ENCODE measurements at regions of chr5 and their contacts with region 1.

Region 1: DNA sequence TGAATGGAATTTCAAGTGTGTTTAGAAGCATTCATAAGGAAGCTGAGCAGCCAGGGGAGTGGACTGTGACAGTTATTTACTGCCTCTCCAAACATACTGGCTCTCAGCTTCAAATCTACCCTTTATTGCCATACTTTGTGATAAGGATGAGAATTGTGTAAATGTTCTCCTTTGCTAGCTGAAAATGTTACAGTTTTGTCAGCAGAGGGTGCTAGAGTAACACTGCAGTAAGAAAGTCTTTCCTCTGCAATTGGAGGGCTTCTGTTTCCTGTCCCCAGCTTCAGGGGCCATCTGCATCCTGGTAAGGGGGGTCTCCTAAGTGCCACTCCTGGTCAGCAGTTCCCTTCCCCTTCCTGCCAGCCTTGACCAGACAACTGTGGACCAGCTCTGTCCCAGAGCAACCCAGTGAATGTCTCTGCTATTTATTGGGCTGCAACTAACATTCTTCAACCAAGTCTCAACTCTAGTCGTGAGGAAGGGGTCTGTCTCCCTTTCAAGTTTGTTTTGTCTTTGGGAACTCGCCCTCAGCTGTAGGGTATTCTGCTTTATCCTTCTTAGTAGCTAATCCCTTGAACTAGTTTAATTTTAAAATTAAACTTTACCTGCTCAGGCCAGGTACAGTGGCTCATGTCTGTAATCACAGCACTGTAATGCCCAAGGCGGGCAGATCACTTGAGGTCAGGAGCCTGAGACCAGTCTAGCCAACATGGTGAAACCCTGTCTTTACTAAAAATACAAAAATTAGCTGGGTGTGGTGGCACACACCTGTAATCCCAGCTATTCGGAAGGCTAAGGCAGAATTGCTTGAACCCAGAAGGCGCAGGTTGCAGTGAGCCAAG is 45.3 kb downstream of the RAPGEF6 start:
- DNase-seq: peak in 8 of 14 experiments; percentile 11 to 76 (median 33)
- ATAC-seq: peak; percentile 71
- H3K4me3 ChIP-seq: no peak overlapping the region
- H3K4me3 Mint-ChIP-seq: no peak overlapping the region
- H3K27ac ChIP-seq: no peak overlapping the region
- H3K27ac Mint-ChIP-seq: peak overlapping the region; percentile 38
- H3K4me1 ChIP-seq: peaks cover 16% of the 10 kb centered on the region
- H3K4me1 Mint-ChIP-seq: peaks cover 64% of the 10 kb centered on the region
- H3K27me3 ChIP-seq: no peaks in the 10 kb centered on the region
- H3K27me3 Mint-ChIP-seq: no peaks in the 10 kb centered on the region
- CTCF ChIP-seq: peak; percentile 98

Region 2: DNA sequence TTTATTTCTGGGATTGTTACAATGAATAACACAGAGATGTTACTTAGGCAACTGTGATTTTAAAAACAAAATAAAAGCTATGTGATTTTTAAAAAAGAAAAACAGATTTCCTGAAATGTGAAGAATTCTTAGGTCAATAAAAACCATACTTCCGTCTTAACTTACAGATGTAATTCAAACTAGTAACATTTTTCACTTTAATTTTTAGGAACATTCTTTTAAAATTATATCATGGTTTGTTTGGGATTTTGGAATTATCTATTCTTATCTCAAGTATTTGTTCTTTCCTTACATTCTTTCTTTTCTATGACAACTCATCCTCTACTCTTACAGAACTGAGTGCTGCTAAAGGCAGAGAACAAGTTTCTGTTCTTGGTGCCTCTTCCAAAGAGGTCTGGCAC is 114.2 kb before region 1 on chr5:
- CTCF ChIA-PET with region 1: no interaction called
- POLR2A ChIA-PET with region 1: no interaction called
- intact Hi-C with region 1: no loop called
- DNase-seq: no peak
- ATAC-seq: no peak
- H3K4me3 ChIP-seq: no peak overlapping the region
- H3K4me3 Mint-ChIP-seq: no peak overlapping the region
- H3K27ac ChIP-seq: no peak overlapping the region
- H3K27ac Mint-ChIP-seq: peak overlapping the region; percentile 69
- H3K4me1 ChIP-seq: peaks cover 4% of the 10 kb centered on the region
- H3K4me1 Mint-ChIP-seq: peaks cover 64% of the 10 kb centered on the region
- H3K27me3 ChIP-seq: no peaks in the 10 kb centered on the region
- H3K27me3 Mint-ChIP-seq: no peaks in the 10 kb centered on the region
- CTCF ChIP-seq: no peak

Region 3: GRCh38 chr5:131706281-131706680 is 116.6 kb after region 1 on chr5:
- CTCF ChIA-PET with region 1: interaction called, 10 read pairs
- POLR2A ChIA-PET with region 1: no interaction called
- intact Hi-C with region 1: no loop called
- DNase-seq: peak in 2 of 14 experiments; percentile 9 to 14
- ATAC-seq: no peak
- H3K4me3 ChIP-seq: no peak overlapping the region
- H3K4me3 Mint-ChIP-seq: no peak overlapping the region
- H3K27ac ChIP-seq: no peak overlapping the region
- H3K27ac Mint-ChIP-seq: no peak overlapping the region
- H3K4me1 ChIP-seq: no peaks in the 10 kb centered on the region
- H3K4me1 Mint-ChIP-seq: peaks cover 3% of the 10 kb centered on the region
- H3K27me3 ChIP-seq: no peaks in the 10 kb centered on the region
- H3K27me3 Mint-ChIP-seq: no peaks in the 10 kb centered on the region
- CTCF ChIP-seq: no peak

Region 4: DNA sequence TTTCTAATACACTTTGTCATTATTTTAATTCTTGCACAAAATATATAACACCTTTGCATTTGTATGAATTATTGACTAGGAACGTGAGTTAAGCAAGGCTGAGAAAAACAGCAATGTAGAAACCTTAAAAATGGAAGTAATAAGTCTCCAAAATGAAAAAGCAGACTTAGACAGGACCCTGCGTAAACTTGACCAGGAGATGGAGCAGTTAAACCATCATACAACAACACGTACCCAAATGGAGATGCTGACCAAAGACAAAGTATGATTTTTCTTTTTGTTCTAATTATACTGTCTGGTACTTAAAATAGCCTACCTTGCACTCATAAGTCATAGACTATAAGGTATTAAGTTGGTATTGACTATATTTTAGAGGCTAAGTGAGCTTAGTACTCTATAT is 1001.4 kb after region 1 on chr5:
- CTCF ChIA-PET with region 1: no interaction called
- POLR2A ChIA-PET with region 1: no interaction called
- intact Hi-C with region 1: no loop called
- DNase-seq: peak in 3 of 14 experiments; percentile 10 to 14 (median 13)
- ATAC-seq: no peak
- H3K4me3 ChIP-seq: no peak overlapping the region
- H3K4me3 Mint-ChIP-seq: no peak overlapping the region
- H3K27ac ChIP-seq: no peak overlapping the region
- H3K27ac Mint-ChIP-seq: no peak overlapping the region
- H3K4me1 ChIP-seq: no peaks in the 10 kb centered on the region
- H3K4me1 Mint-ChIP-seq: no peaks in the 10 kb centered on the region
- H3K27me3 ChIP-seq: no peaks in the 10 kb centered on the region
- H3K27me3 Mint-ChIP-seq: no peaks in the 10 kb centered on the region
- CTCF ChIP-seq: no peak